Colonic mucosa (tissue), 4 donors: ENCODE measurements at regions of chr2 and their contacts with region 1.

Region 1: GRCh38 chr2:79860228-79861058 is 347.6 kb downstream of the CTNNA2 start:
- DNase-seq: no peak
- H3K4me3 ChIP-seq: no peak overlapping the region
- H3K27ac ChIP-seq: no peak overlapping the region
- H3K4me1 ChIP-seq: no peaks in the 10 kb centered on the region
- H3K27me3 ChIP-seq: no peaks in the 10 kb centered on the region
- CTCF ChIP-seq: no peak

Region 2: GRCh38 chr2:79235135-79235534 is 625.3 kb before region 1 on chr2:
- intact Hi-C with region 1: loop called (anchors 10 kb)
- DNase-seq: no peak
- H3K4me3 ChIP-seq: no peak overlapping the region
- H3K27ac ChIP-seq: no peak overlapping the region
- H3K4me1 ChIP-seq: no peaks in the 10 kb centered on the region
- H3K27me3 ChIP-seq: no peaks in the 10 kb centered on the region
- CTCF ChIP-seq: no peak

Region 3: DNA sequence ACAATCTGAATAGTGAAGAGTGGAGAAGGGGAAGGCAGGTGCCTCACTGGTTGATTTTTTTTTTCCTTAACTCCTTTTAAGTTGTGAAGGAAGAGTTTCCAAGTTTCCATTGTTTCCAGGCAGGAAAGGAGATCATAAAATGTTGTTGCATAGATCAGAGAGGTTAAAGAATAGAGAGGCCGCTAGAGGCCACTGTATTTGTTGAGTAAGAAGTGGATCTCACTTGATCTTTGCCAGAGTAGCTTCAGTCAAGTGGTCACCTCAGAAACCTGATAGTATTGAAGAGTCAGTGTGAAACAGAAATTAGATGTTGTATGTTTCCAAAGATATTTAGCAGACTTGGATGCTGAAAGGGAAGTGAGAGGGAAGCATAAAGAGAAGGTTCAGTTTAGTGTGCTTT is 330.0 kb before region 1 on chr2:
- intact Hi-C with region 1: loop called (anchors 10 kb)
- DNase-seq: no peak
- H3K4me3 ChIP-seq: no peak overlapping the region
- H3K27ac ChIP-seq: no peak overlapping the region
- H3K4me1 ChIP-seq: no peaks in the 10 kb centered on the region
- H3K27me3 ChIP-seq: no peaks in the 10 kb centered on the region
- CTCF ChIP-seq: no peak